Activated CD4-positive, alpha-beta memory T cell treated with anti-CD3 and anti-CD28 coated beads for 36 hours (primary cell): ENCODE measurements at regions of chr22 and their contacts with region 1.

Region 1: GRCh38 chr22:24156913-24157821 is 24.1 kb upstream of the SUSD2 start:
- DNase-seq: peak; percentile 92
- H3K4me3 Mint-ChIP-seq: peak overlapping the region; percentile 80
- H3K27ac Mint-ChIP-seq: peak overlapping the region; percentile 79
- H3K4me1 Mint-ChIP-seq: peaks cover 62% of the 10 kb centered on the region
- H3K27me3 Mint-ChIP-seq: no peaks in the 10 kb centered on the region

Region 2: GRCh38 chr22:23984430-23984829 is 172.7 kb before region 1 on chr22:
- CTCF ChIA-PET with region 1: no interaction called
- POLR2A ChIA-PET with region 1: no interaction called
- intact Hi-C with region 1: loop called (anchors 10 kb)
- DNase-seq: peak; percentile 65
- H3K4me3 Mint-ChIP-seq: no peak overlapping the region
- H3K27ac Mint-ChIP-seq: no peak overlapping the region
- H3K4me1 Mint-ChIP-seq: peaks cover 2% of the 10 kb centered on the region
- H3K27me3 Mint-ChIP-seq: no peaks in the 10 kb centered on the region

Region 3: GRCh38 chr22:24011735-24012068 is 145.5 kb before region 1 on chr22:
- CTCF ChIA-PET with region 1: interaction called, 12 read pairs
- POLR2A ChIA-PET with region 1: interaction called, 19 read pairs
- intact Hi-C with region 1: loop called (anchors 2 kb)
- DNase-seq: no peak
- H3K4me3 Mint-ChIP-seq: peak overlapping the region; percentile 92
- H3K27ac Mint-ChIP-seq: peak overlapping the region; percentile 92
- H3K4me1 Mint-ChIP-seq: peaks cover 24% of the 10 kb centered on the region
- H3K27me3 Mint-ChIP-seq: no peaks in the 10 kb centered on the region

Region 4: GRCh38 chr22:24106385-24107381 is 50.5 kb before region 1 on chr22:
- CTCF ChIA-PET with region 1: interaction called, 16 read pairs
- POLR2A ChIA-PET with region 1: interaction called, 3 read pairs
- intact Hi-C with region 1: loop called (anchors 2 kb)
- DNase-seq: peak; percentile 43
- H3K4me3 Mint-ChIP-seq: no peak overlapping the region
- H3K27ac Mint-ChIP-seq: peak overlapping the region; percentile 23
- H3K4me1 Mint-ChIP-seq: peaks cover 36% of the 10 kb centered on the region
- H3K27me3 Mint-ChIP-seq: no peaks in the 10 kb centered on the region

Region 5: GRCh38 chr22:24146194-24146616 is 11.0 kb before region 1 on chr22:
- CTCF ChIA-PET with region 1: interaction called, 38 read pairs
- POLR2A ChIA-PET with region 1: no interaction called
- intact Hi-C with region 1: no loop called
- DNase-seq: peak; percentile 40
- H3K4me3 Mint-ChIP-seq: no peak overlapping the region
- H3K27ac Mint-ChIP-seq: peak overlapping the region; percentile 3
- H3K4me1 Mint-ChIP-seq: peaks cover 50% of the 10 kb centered on the region
- H3K27me3 Mint-ChIP-seq: no peaks in the 10 kb centered on the region

Region 6: GRCh38 chr22:24175160-24175808 is 18.1 kb after region 1 on chr22:
- CTCF ChIA-PET with region 1: interaction called, 102 read pairs
- POLR2A ChIA-PET with region 1: no interaction called
- intact Hi-C with region 1: no loop called
- DNase-seq: peak; percentile 76
- H3K4me3 Mint-ChIP-seq: no peak overlapping the region
- H3K27ac Mint-ChIP-seq: no peak overlapping the region
- H3K4me1 Mint-ChIP-seq: no peaks in the 10 kb centered on the region
- H3K27me3 Mint-ChIP-seq: no peaks in the 10 kb centered on the region

Region 7: GRCh38 chr22:24516301-24516737 is 359.2 kb after region 1 on chr22:
- CTCF ChIA-PET with region 1: no interaction called
- POLR2A ChIA-PET with region 1: no interaction called
- intact Hi-C with region 1: no loop called
- DNase-seq: no peak
- H3K4me3 Mint-ChIP-seq: no peak overlapping the region
- H3K27ac Mint-ChIP-seq: no peak overlapping the region
- H3K4me1 Mint-ChIP-seq: peaks cover 5% of the 10 kb centered on the region
- H3K27me3 Mint-ChIP-seq: no peaks in the 10 kb centered on the region